ENCODE measurements at regions of chr1 and their contacts with region 1.

Region 1: DNA sequence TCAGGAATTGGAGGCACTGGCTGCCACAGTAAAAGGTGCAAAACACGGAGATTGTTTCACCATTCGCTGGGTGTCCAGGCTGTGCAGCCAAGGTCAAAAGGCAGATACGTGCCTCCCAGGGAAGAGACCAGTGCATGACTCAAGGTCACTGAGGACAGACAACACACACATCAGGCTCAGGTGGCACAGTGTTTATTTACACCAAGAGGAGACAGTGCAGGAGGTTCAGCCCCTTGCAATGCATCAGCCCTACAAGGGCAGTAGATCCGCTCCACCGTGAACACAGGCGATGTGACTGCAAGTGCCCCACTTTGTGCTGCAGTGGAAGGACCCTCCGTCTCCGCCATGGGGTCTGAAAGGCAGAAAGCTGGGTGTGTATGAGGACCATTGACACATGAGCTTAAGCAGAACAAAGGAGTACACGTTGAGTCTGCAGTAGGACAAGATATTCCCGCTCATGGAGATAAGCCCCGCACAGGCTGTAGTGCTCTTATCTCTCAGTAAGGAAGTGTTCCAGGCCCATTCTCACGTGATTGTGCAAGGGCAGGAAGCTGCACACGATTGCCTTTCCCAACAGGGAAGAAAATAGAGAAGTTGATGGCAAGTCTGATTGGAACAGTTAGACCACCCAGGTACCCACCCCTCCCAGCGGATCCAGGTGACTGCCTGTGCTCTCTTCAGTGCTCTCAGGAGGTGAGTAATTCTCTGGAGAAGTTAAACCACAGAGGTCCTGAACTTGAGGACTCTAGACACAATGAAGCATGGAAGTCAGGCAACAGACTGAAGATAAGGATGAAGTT is 37.5 kb upstream of the QSOX1 start:
- DNase-seq: peak in 4 of 5 donors; percentile 17 to 59 (median 32)
- ATAC-seq: peak; percentile 72 to 90 (median 82)
- H3K4me3 ChIP-seq: no peak overlapping the region
- H3K27ac ChIP-seq: peak overlapping the region in 3 of 12 donors; percentile 11 to 49 (median 40)
- H3K4me1 ChIP-seq: peaks cover 0 to 42% (median 20%) of the 10 kb centered on the region in 12 donors
- H3K27me3 ChIP-seq: no peaks in the 10 kb centered on the region
- CTCF ChIP-seq: no peak
- POLR2A ChIP-seq: no peak

Region 2: DNA sequence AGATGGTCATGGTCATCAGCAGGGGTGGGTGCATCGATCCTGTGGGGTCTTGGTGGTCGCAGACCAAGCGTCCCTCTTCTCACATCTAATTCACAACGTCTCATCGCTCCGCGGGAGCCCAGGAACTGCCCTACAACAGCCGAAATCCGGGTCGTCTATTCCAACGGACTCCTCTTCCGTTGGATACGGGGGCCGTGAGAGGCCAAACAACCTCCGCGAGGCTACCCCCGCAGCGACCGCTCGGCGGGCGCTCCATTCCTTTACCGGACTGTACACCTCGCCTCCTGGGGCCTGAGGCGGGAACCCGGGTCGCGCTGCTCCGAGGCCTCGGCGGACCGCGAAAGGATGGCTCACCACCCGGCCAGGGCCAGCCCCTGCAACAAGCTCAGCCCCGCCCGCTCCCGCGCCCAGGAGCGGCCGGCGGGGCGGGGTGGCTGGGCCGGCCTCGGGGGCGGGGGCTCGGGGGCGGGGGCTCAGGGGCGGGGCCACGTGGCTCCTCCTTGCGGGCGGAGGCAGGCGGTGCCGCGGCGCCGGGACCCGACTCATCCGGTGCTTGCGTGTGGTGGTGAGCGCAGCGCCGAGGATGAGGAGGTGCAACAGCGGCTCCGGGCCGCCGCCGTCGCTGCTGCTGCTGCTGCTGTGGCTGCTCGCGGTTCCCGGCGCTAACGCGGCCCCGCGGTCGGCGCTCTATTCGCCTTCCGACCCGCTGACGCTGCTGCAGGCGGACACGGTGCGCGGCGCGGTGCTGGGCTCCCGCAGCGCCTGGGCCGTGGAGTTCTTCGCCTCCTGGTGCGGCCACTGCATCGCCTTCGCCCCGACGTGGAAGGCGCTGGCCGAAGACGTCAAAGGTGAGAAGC is 37.4 kb after region 1 on chr1 and contains the start of gene QSOX1:
- intact Hi-C with region 1: loop called in 2 of 10 experiments (anchors 5 kb)
- DNase-seq: peak; percentile 91 to 96 (median 93)
- ATAC-seq: peak; percentile 72 to 97 (median 92)
- H3K4me3 ChIP-seq: peak within 1 kb of the TSS; percentile 70 to 100 (median 98)
- H3K27ac ChIP-seq: peak within 1 kb of the TSS; percentile 83 to 99 (median 96)
- H3K4me1 ChIP-seq: peaks cover 0 to 54% (median 23%) of the 10 kb centered on the region in 12 donors
- H3K27me3 ChIP-seq: no peaks in the 10 kb centered on the region
- CTCF ChIP-seq: peak in 8 of 12 donors; percentile 15 to 47 (median 38)
- POLR2A ChIP-seq: peak; percentile 76 to 95
- total RNA-seq, gene QSOX1: 62.3 to 250 (median 122) TPM

Region 3: GRCh38 chr1:180168786-180169639 is 51.8 kb after region 1 on chr1:
- intact Hi-C with region 1: loop called in 4 of 10 experiments (anchors 2 to 10 kb)
- DNase-seq: peak in 1 of 5 donors; percentile 59
- ATAC-seq: peak in 3 of 4 donors; percentile 38 to 64 (median 60)
- H3K4me3 ChIP-seq: no peak overlapping the region
- H3K27ac ChIP-seq: peak overlapping the region in 3 of 12 donors; percentile 24 to 82 (median 73)
- H3K4me1 ChIP-seq: peaks cover 10 to 58% (median 39%) of the 10 kb centered on the region in 12 donors
- H3K27me3 ChIP-seq: no peaks in the 10 kb centered on the region
- CTCF ChIP-seq: peak in 11 of 12 donors; percentile 25 to 57 (median 41)
- POLR2A ChIP-seq: no peak

Region 4: DNA sequence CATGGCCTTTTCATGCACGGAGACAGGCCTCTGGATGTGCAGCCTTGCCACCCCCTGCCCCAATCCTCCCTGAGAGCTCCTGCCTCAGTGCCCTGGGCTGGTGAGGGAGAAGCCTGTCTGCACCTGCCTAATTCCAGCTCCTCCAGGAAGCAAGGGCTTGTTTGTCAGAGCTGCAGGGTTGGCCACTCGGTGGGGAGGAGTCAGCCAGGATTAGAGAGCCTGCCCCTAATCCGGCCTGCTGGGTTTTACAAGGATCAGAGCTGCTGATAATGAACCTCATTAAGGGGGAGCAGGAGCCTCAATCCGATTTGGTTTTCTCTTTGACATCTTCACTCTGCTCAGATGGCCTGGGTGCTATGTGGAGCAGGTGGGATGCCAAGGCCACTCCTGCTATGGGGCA is 81.0 kb after region 1 on chr1:
- intact Hi-C with region 1: no loop called
- DNase-seq: peak in 1 of 5 donors; percentile 34
- ATAC-seq: no peak
- H3K4me3 ChIP-seq: no peak overlapping the region
- H3K27ac ChIP-seq: no peak overlapping the region
- H3K4me1 ChIP-seq: no peaks in the 10 kb centered on the region
- H3K27me3 ChIP-seq: no peaks in the 10 kb centered on the region
- CTCF ChIP-seq: no peak
- POLR2A ChIP-seq: no peak

Measured in heart left ventricle (tissue), 16 donors.